ENCODE measurements at regions of chr6 and their contacts with region 1.

Region 1: DNA sequence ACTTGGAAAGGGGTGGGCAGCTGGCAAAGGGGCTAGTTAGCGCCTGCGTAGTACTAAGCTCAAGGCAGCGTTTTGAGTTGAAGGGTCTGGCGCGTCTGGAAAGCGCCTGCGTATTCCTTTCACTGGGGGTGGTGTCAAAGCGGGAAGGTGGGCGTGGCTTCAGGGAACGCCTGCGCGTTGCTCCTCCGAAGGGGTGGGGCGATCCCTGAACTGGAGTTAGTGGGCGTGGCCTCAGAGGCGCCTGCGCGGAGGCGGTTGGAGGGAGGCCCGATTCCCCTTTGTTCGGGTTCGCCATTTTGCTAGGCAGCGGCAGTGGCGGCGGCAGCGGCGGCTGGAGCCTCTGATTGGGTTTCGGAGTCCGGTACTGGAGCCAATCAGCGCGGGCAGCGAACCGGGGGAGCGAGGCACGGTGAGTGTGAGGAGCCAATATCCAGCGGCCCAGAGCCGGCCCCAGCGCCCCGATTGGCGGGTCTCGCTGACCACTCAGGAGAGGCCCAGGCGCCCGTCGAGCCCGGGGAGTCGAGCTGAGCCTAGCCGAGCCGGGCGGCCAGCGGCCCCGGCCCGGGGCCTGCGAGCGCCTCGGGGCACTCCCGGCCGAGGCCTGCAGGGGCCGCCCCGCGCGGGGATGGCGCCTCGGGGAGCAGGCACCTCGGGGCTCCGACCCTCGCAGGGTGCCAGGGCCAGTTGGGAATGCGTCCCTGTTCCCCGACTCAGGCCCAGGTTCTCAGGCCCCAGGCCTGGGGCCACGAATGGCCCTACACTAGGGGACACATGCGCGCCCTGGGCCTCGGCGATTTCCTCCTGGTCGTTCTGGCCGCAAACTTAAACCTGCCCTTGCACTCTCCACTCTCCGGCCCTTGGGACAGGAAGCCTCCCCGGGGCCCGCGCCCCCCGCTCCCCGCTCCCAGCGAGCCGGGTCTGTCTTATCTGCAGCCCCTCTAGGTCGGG is at the start of gene NFYA:
- DNase-seq: peak; percentile 97
- H3K4me3 ChIP-seq: peak within 1 kb of the TSS; percentile 93
- CTCF ChIP-seq: peak; percentile 23

Region 2: GRCh38 chr6:40743226-40743625 is 329.7 kb before region 1 on chr6:
- CTCF ChIA-PET with region 1: no interaction called
- POLR2A ChIA-PET with region 1: no interaction called
- DNase-seq: no peak
- H3K4me3 ChIP-seq: no peak overlapping the region
- CTCF ChIP-seq: no peak

Region 3: GRCh38 chr6:40819182-40819834 is 253.6 kb before region 1 on chr6:
- CTCF ChIA-PET with region 1: no interaction called
- POLR2A ChIA-PET with region 1: no interaction called
- DNase-seq: no peak
- H3K4me3 ChIP-seq: no peak overlapping the region
- CTCF ChIP-seq: no peak

Region 4: GRCh38 chr6:41039060-41039998 is 33.6 kb before region 1 on chr6 and contains the start of gene UNC5CL:
- CTCF ChIA-PET with region 1: interaction called, 10 read pairs
- POLR2A ChIA-PET with region 1: no interaction called
- DNase-seq: no peak
- H3K4me3 ChIP-seq: no peak within 1 kb of the TSS
- CTCF ChIP-seq: peak; percentile 66

Region 5: DNA sequence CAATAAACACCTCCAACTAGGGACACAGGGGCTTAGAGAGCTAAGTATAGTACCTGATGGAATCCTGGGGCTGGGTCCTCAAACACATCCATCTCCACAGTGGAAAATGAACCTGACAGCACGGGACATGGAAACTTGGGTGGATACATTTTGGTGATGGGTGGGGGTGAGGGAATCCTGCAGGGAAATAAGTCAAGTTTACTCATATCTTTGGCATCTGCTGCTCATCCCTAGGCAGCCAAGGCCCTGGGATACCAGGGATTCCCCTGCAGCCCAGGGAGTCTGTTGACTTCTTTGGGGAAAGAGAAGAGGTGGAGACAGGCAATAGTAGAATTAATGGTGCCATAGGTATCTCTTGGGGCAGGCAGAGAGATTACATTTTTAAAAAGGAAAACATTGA is 13.4 kb before region 1 on chr6:
- CTCF ChIA-PET with region 1: interaction called, 37 read pairs
- POLR2A ChIA-PET with region 1: interaction called, 3 read pairs
- DNase-seq: no peak
- H3K4me3 ChIP-seq: no peak overlapping the region
- CTCF ChIP-seq: no peak

Region 6: GRCh38 chr6:41092421-41093140 is 19.6 kb after region 1 on chr6:
- CTCF ChIA-PET with region 1: interaction called, 25 read pairs
- POLR2A ChIA-PET with region 1: no interaction called
- DNase-seq: no peak
- H3K4me3 ChIP-seq: no peak overlapping the region
- CTCF ChIP-seq: peak; percentile 43

Region 7: DNA sequence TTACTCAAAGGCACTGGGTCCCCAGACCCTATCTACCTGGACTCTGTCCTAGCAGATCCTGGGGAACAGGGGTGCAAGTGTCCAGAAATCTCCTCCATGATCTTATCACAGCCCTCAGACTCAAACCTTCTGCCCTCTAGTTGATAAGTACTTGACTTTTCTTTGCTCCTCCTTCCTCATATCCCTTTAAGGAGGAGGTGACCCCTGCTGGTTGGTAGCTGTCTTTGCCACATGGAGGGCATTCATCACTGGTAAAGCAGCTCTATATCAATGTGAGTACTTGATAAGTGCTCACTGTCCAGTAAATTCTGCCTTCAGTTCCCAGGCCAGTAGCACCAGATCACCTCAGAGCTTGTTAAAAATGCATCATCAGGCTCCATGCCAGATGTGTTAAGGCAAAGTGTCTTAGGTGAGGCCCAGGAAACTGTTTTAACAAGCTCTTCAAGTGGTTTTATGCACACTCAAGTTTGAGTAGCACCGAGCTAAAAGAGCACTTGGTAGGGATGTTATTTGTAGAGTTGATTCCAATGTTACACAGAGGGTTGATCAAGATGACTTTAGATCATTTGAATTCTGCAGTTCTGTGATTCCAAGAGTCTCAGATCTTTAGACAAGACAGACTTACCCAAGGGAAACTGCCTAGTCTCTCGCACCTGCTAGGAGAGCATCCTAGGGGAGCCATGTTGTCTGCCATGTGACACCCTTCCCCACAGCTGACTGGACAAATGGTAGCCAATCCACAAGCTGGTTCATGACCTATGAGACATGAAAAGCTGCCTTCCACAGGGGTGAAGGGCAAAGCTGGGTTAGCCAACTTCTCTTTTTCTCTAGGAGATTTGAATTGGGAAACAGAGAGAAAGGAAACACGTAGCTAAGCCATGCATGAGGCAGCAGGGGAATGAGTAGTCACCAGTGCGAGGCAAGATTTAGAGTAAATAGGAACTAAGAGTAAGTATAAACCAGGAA is 109.4 kb after region 1 on chr6:
- CTCF ChIA-PET with region 1: interaction called, 11 read pairs
- POLR2A ChIA-PET with region 1: no interaction called
- DNase-seq: peak; percentile 28
- H3K4me3 ChIP-seq: no peak overlapping the region
- CTCF ChIP-seq: peak; percentile 72

Measured in AG04449 (cell line).